GM12878 (cell line): ENCODE measurements at regions of chr10 and their contacts with region 1.

Region 1: DNA sequence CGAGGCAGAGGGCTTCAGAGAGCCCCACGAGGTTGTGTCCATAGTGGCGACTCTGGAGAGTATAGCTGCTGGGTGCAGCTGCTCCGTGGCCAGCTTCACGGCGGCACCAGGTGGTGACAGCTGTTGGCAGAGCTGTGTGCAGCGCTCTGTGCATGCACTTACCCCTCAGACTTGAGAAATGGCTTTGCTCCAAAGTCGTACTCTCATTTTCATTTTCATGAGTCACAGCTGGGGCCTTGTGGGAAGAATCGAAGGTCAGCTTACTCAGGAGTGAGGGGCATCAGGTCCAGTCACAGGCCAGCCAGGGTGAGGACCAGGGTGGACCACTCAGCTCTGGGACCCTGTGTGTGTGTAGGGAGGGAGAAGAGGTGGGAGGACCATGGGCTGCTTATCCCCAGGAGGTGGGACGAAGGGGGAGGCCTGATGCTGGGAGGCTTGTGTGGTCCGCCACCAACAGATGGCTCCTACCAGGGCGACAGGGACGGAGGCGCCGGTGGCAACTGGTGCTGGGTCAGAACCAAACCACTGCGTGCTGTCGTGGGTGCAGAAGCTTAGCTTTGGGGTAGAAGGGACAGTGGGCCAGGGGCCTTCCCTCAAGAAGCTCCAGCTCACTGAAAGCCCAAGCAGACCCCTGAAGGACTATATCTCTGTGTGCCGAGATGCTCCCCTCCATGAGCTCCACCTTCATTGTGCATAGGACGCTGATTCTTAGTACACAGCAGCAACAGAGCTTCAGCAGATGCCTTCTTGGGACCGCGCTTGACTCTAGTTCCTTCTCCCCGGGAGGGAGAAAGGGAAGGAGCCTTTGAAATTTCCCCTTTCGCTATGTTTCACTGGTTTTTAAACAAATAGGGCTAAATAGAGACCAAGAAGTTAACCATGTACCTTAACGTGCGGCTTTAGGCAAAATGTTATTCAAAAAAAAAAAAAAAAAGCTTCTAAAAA is 225.0 kb downstream of the CELF2 start:
- DNase-seq: peak; percentile 90
- ATAC-seq: peak; percentile 58
- H3K4me3 ChIP-seq: peak overlapping the region; percentile 57
- H3K27ac ChIP-seq: peak overlapping the region; percentile 97
- H3K4me1 ChIP-seq: peaks cover 80% of the 10 kb centered on the region
- H3K27me3 ChIP-seq: no peaks in the 10 kb centered on the region
- CTCF ChIP-seq: peak in 1 of 3 experiments; percentile 40; a peak in 2 of 6 replicates
- EP300 ChIP-seq: peak in 1 of 2 experiments; percentile 85; a peak in 2 of 4 replicates
- POLR2A ChIP-seq: peak; percentile 86
- RAD21 ChIP-seq: peak; percentile 2; the same call in 1 of the 2 replicates

Region 2: DNA sequence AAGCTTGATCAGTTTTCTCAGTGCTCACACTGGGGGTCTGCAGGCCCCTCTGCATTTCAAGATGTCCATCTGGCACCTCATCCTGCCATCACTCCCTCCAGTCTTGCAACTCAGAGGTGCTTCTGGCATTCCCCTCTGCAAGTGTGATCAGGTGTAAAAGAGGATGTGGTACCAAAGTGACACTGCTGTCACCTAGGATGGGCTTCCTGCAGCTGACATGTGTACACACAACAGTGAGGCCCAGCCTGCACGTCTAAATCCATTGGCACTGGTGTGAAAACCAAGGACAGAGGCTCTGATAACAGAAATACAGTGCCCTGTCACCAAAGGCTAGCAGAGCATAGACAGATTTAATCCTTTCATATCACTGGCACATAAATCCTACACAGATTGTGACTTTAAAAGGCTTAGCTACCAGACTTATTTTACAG is 387.5 kb before region 1 on chr10:
- CTCF ChIA-PET with region 1: no interaction called
- POLR2A ChIA-PET with region 1: no interaction called
- RAD21 ChIA-PET with region 1: no interaction called
- SMC1A ChIA-PET with region 1: no interaction called
- in situ Hi-C with region 1: no loop called
- intact Hi-C with region 1: no loop called
- DNase-seq: no peak
- ATAC-seq: peak; percentile 55
- H3K4me3 ChIP-seq: no peak overlapping the region
- H3K27ac ChIP-seq: no peak overlapping the region
- H3K4me1 ChIP-seq: peaks cover 7% of the 10 kb centered on the region
- H3K27me3 ChIP-seq: no peaks in the 10 kb centered on the region
- CTCF ChIP-seq: no peak
- EP300 ChIP-seq: no peak
- POLR2A ChIP-seq: no peak
- RAD21 ChIP-seq: no peak

Region 3: GRCh38 chr10:10967029-10967428 is 275.7 kb before region 1 on chr10:
- CTCF ChIA-PET with region 1: no interaction called
- POLR2A ChIA-PET with region 1: no interaction called
- RAD21 ChIA-PET with region 1: no interaction called
- SMC1A ChIA-PET with region 1: no interaction called
- in situ Hi-C with region 1: no loop called
- intact Hi-C with region 1: no loop called
- DNase-seq: no peak
- ATAC-seq: no peak
- H3K4me3 ChIP-seq: no peak overlapping the region
- H3K27ac ChIP-seq: no peak overlapping the region
- H3K4me1 ChIP-seq: no peaks in the 10 kb centered on the region
- H3K27me3 ChIP-seq: no peaks in the 10 kb centered on the region; a peak in 2 of 4 replicates
- CTCF ChIP-seq: no peak
- EP300 ChIP-seq: no peak
- POLR2A ChIP-seq: no peak
- RAD21 ChIP-seq: no peak

Region 4: DNA sequence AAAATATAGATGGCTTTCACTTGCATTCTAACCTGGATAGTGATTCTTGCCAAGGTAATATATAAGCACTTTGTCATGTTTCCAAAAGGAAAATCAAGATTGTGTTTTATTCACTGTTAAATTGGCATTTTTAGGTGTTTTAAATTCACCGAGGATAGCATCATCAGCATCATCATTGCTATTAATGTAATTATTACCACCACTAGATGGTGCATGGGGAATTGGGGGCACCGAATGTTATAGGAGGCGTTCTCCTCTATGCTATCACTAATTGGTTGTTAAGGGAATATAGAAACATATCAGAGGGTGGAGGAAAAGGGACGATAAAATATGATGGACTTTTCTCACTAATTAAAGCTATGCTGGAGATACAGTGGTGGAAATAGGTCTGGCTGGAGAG is 129.6 kb before region 1 on chr10:
- CTCF ChIA-PET with region 1: interaction called, 16 read pairs
- POLR2A ChIA-PET with region 1: no interaction called
- RAD21 ChIA-PET with region 1: interaction called, 14 read pairs
- SMC1A ChIA-PET with region 1: interaction called, 16 read pairs
- in situ Hi-C with region 1: no loop called
- intact Hi-C with region 1: loop called (anchors 5 kb)
- DNase-seq: peak; percentile 20
- ATAC-seq: peak; percentile 97
- H3K4me3 ChIP-seq: no peak overlapping the region
- H3K27ac ChIP-seq: no peak overlapping the region
- H3K4me1 ChIP-seq: no peaks in the 10 kb centered on the region
- H3K27me3 ChIP-seq: no peaks in the 10 kb centered on the region
- CTCF ChIP-seq: peak; percentile 58 to 70 (median 59); a peak in 5 of 6 replicates
- EP300 ChIP-seq: no peak
- POLR2A ChIP-seq: no peak
- RAD21 ChIP-seq: peak; percentile 81

Region 5: DNA sequence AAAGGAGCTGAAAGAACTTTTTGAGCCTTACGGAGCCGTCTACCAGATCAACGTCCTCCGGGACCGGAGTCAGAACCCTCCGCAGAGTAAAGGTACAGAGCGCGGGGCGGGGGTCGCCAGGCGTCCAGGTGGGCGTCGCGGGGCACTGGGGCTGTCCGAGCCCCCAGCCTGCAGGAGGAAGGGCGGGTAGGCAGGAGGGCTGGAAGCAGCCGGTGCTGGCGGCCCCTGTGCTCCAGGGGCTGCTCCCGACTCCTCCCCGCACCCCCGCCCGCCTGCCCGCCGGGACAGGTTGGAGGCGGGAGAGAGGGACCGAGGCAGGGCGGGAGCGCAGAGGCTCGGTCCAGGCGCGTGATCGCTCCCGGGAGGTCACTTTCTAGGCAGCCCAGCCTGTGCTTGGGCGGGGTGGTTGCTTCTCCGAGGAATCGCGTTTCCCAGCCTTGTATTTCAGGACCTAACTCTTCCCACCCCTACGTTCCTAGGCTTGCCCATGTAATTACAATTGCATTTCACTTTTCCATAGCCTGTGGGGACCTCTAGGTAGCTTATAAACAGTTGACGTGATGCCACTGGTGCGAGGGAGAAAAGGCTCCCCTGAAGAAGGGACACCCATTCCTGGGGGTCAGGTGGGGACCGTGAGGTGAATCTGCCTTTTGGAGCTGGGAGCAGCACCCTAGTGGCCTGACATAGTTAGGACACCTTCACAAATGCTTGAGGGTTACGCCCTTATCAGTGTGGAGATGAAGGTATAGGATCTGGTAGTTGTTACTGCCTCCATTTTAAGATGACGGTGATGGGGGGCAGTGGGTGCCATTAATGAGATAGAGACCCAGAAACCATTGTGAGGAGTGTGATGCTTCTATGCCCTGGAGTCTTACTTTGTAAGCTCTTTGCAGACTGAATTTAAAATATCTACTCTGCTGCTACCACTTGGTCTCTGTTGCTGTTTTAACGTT is 76.8 kb before region 1 on chr10:
- CTCF ChIA-PET with region 1: interaction called, 13 read pairs
- POLR2A ChIA-PET with region 1: interaction called, 24 read pairs
- RAD21 ChIA-PET with region 1: interaction called, 81 read pairs
- SMC1A ChIA-PET with region 1: interaction called, 417 read pairs
- in situ Hi-C with region 1: no loop called
- intact Hi-C with region 1: no loop called
- DNase-seq: no peak
- ATAC-seq: peak; percentile 69
- H3K4me3 ChIP-seq: peak overlapping the region; percentile 96
- H3K27ac ChIP-seq: peak overlapping the region; percentile 95
- H3K4me1 ChIP-seq: peaks cover 21% of the 10 kb centered on the region
- H3K27me3 ChIP-seq: no peaks in the 10 kb centered on the region
- CTCF ChIP-seq: peak; percentile 66 to 89 (median 72)
- EP300 ChIP-seq: no peak
- POLR2A ChIP-seq: peak; percentile 54; the same call in 1 of the 2 replicates
- RAD21 ChIP-seq: peak; percentile 68

Region 6: DNA sequence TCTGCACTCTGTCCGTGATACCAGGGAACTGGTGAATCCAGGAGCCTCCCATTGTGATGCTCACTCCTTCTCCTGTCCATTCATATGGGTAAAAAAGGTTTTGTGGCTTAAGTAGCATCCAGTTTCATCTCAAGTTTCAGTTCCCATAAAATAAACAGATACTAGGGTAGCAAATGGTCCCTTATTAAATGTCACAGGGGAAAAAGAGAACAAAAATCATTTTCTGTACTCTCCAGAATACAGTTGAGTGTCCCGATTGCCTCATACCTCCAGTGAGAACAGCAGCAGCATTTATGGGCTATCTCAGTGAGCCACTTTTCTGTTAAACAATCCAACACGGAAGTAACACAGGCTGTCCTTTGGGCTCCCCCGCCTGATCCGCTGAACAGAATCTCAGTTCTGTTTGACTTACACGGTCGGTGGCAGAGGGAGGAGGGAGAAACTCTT is 45.4 kb before region 1 on chr10:
- CTCF ChIA-PET with region 1: interaction called, 3 read pairs
- POLR2A ChIA-PET with region 1: interaction called, 7 read pairs
- RAD21 ChIA-PET with region 1: interaction called, 20 read pairs
- SMC1A ChIA-PET with region 1: interaction called, 17 read pairs
- in situ Hi-C with region 1: no loop called
- intact Hi-C with region 1: loop called (anchors 2 kb)
- DNase-seq: peak; percentile 79
- ATAC-seq: peak; percentile 85
- H3K4me3 ChIP-seq: no peak overlapping the region
- H3K27ac ChIP-seq: peak overlapping the region; percentile 63
- H3K4me1 ChIP-seq: peaks cover 84% of the 10 kb centered on the region
- H3K27me3 ChIP-seq: no peaks in the 10 kb centered on the region
- CTCF ChIP-seq: no peak
- EP300 ChIP-seq: peak; percentile 64 to 87
- POLR2A ChIP-seq: peak; percentile 61; the same call in 1 of the 2 replicates
- RAD21 ChIP-seq: no peak

Region 7: DNA sequence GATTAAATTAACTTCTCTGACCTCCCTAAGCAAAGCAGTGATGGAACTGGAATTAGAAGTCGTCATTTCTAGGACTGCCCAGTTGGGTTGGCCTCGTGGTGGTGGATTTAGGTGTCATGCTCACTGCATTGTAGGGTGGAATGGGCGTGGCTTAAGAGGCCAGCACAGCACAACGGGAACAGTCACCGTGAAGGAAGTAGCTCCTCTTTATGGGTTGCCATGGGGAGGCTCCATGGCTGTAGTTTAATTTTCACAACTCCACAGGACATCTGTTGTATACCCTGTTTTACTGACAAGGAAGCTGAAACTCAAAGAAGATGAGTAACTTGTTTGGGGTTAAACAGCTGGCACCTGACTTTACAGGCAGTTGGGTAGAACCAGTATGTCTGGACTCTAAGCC is 16.8 kb before region 1 on chr10:
- CTCF ChIA-PET with region 1: interaction called, 27 read pairs
- POLR2A ChIA-PET with region 1: interaction called, 19 read pairs
- RAD21 ChIA-PET with region 1: interaction called, 23 read pairs
- SMC1A ChIA-PET with region 1: interaction called, 44 read pairs
- in situ Hi-C with region 1: no loop called
- intact Hi-C with region 1: no loop called
- DNase-seq: no peak
- ATAC-seq: peak; percentile 79
- H3K4me3 ChIP-seq: 0 out of 2 replicates have a peak overlapping the region, but pooled peaks have one; percentile 8
- H3K27ac ChIP-seq: peak overlapping the region; percentile 77
- H3K4me1 ChIP-seq: peaks cover 62% of the 10 kb centered on the region
- H3K27me3 ChIP-seq: no peaks in the 10 kb centered on the region
- CTCF ChIP-seq: no peak
- EP300 ChIP-seq: 0 out of 4 replicates have a peak, but pooled peaks of 1 of the 2 experiments have one; percentile 23
- POLR2A ChIP-seq: no peak
- RAD21 ChIP-seq: no peak

Region 8: GRCh38 chr10:11261687-11262493 is 19.2 kb after region 1 on chr10:
- CTCF ChIA-PET with region 1: interaction called, 4 read pairs
- POLR2A ChIA-PET with region 1: interaction called, 16 read pairs
- RAD21 ChIA-PET with region 1: interaction called, 8 read pairs
- SMC1A ChIA-PET with region 1: interaction called, 10 read pairs
- in situ Hi-C with region 1: no loop called
- intact Hi-C with region 1: no loop called
- DNase-seq: no peak
- ATAC-seq: peak; percentile 26
- H3K4me3 ChIP-seq: no peak overlapping the region
- H3K27ac ChIP-seq: peak overlapping the region; percentile 11
- H3K4me1 ChIP-seq: peaks cover 73% of the 10 kb centered on the region
- H3K27me3 ChIP-seq: no peaks in the 10 kb centered on the region
- CTCF ChIP-seq: no peak
- EP300 ChIP-seq: no peak
- POLR2A ChIP-seq: no peak
- RAD21 ChIP-seq: 0 out of 2 replicates have a peak, but pooled peaks have one; percentile 1